ENCODE measurements at regions of chr11 and their contacts with region 1.

Region 1: GRCh38 chr11:61516675-61517572 is 8.4 kb downstream of the LRRC10B start:
- DNase-seq: peak; percentile 24
- ATAC-seq: peak; percentile 56
- H3K4me3 ChIP-seq: no peak overlapping the region; a peak in 1 of 4 replicates
- H3K27ac ChIP-seq: no peak overlapping the region
- H3K4me1 ChIP-seq: peaks cover 5% of the 10 kb centered on the region
- H3K27me3 ChIP-seq: no peaks in the 10 kb centered on the region
- CTCF ChIP-seq: peak; percentile 99

Region 2: GRCh38 chr11:61091373-61092279 is 425.3 kb before region 1 on chr11:
- CTCF ChIA-PET with region 1: no interaction called
- POLR2A ChIA-PET with region 1: no interaction called
- in situ Hi-C with region 1: no loop called
- intact Hi-C with region 1: no loop called
- DNase-seq: no peak
- ATAC-seq: peak; percentile 40; the same call in 1 of the 2 replicates
- H3K4me3 ChIP-seq: no peak overlapping the region
- H3K27ac ChIP-seq: no peak overlapping the region
- H3K4me1 ChIP-seq: no peaks in the 10 kb centered on the region
- H3K27me3 ChIP-seq: no peaks in the 10 kb centered on the region
- CTCF ChIP-seq: no peak

Region 3: DNA sequence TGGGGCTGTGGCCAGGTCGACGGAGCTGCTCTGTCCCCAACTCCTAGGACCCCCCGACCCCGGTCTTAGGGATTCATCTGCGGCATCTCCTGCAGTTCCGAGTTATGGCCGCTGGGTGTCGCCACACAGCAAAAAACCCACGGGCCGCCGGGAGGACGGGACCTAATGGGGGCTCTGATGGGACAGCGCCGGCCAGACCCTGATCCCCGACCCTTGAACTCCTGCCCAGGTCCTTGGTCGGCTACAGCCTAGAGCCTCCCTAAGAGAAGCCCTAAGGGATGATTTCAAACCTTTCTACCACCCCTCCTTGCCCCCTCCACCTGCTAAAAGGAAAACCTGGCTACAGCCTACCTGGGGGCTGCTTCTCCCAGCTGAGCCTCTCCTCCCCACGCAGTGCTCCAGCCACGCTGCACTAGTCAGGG is 39.2 kb before region 1 on chr11:
- CTCF ChIA-PET with region 1: interaction called, 31 read pairs
- POLR2A ChIA-PET with region 1: no interaction called
- in situ Hi-C with region 1: no loop called
- intact Hi-C with region 1: loop called (anchors 1 kb)
- DNase-seq: no peak
- ATAC-seq: peak; percentile 37; the same call in 1 of the 2 replicates
- H3K4me3 ChIP-seq: no peak overlapping the region
- H3K27ac ChIP-seq: no peak overlapping the region
- H3K4me1 ChIP-seq: peaks cover 3% of the 10 kb centered on the region; the same call in 1 of the 2 replicates
- H3K27me3 ChIP-seq: no peaks in the 10 kb centered on the region
- CTCF ChIP-seq: peak; percentile 96

Region 4: DNA sequence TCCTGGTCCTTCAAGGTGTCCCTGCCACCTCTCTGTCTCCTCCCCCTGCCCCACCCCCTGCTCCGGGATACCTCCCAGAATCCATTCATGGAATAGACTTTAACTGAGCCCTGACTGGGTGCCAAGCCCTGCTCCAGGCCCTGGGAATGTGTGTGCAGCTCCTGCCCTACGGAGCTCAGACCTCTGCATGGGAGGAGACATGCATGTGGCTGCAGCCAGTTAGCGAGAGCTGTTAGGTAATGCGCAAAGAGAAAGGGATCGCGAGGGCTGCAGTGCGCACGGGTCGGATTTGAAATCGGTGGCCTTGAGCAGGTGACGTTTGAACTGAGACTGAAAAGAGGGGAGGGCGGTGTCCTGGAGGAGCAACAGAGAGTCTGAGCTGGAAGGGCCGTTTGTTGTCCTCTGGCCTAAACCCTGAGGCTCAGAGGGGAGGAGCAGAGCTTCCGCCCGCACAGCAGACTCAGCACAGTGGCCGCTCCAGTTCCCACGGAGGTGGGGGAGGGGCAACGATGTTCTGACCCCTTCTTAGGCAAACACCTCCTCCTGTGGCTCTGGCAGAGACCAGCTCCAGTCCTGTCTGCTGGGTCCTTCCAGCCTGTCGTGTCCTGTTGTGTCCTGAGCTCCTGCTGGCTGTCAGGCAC is 28.2 kb before region 1 on chr11:
- CTCF ChIA-PET with region 1: interaction called, 11 read pairs
- POLR2A ChIA-PET with region 1: no interaction called
- in situ Hi-C with region 1: no loop called
- intact Hi-C with region 1: no loop called
- DNase-seq: no peak
- ATAC-seq: peak; percentile 77
- H3K4me3 ChIP-seq: peak overlapping the region; percentile 11 to 44
- H3K27ac ChIP-seq: peak overlapping the region; percentile 58
- H3K4me1 ChIP-seq: peaks cover 16% of the 10 kb centered on the region
- H3K27me3 ChIP-seq: no peaks in the 10 kb centered on the region
- CTCF ChIP-seq: no peak

Region 5: DNA sequence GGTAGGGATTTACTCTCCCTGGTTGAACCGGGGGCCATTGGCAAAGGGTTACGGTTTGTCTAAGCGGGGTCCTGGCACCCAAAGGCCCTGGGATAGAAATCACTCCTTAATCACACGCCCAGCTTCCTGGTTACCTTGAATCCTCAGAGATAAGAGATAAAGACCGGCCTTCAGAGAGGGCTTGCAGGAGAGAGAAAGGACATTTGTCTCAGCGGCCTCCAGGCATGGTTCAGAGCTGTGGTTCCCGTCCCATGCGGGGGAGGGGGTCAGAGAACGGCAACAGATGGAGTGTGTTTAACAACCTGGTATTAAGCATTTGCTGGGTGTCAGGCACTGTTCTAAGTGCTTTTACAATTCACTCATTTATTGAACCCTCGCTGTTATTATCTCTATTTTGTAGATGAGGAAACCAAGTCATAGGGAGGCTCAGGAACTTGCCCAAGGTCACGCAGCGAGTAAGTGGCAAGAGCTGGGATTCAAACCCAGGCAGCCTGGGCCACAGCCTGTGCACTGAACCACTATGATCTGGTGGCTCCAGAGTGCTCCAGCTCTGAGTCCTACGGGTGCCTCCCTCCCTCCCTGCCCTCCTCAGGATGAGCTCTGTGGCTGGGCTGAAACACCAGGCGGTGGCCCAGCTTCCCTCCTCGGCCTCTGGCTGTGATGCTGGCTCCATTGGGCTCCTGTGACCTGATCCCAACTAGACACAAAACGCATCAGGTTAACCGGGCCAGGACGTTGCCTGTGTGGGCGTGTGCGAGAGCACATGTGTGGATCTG is 10.2 kb after region 1 on chr11:
- CTCF ChIA-PET with region 1: interaction called, 14 read pairs
- POLR2A ChIA-PET with region 1: no interaction called
- in situ Hi-C with region 1: no loop called
- intact Hi-C with region 1: no loop called
- DNase-seq: no peak
- ATAC-seq: no peak
- H3K4me3 ChIP-seq: no peak overlapping the region
- H3K27ac ChIP-seq: no peak overlapping the region
- H3K4me1 ChIP-seq: no peaks in the 10 kb centered on the region
- H3K27me3 ChIP-seq: no peaks in the 10 kb centered on the region
- CTCF ChIP-seq: no peak

Region 6: DNA sequence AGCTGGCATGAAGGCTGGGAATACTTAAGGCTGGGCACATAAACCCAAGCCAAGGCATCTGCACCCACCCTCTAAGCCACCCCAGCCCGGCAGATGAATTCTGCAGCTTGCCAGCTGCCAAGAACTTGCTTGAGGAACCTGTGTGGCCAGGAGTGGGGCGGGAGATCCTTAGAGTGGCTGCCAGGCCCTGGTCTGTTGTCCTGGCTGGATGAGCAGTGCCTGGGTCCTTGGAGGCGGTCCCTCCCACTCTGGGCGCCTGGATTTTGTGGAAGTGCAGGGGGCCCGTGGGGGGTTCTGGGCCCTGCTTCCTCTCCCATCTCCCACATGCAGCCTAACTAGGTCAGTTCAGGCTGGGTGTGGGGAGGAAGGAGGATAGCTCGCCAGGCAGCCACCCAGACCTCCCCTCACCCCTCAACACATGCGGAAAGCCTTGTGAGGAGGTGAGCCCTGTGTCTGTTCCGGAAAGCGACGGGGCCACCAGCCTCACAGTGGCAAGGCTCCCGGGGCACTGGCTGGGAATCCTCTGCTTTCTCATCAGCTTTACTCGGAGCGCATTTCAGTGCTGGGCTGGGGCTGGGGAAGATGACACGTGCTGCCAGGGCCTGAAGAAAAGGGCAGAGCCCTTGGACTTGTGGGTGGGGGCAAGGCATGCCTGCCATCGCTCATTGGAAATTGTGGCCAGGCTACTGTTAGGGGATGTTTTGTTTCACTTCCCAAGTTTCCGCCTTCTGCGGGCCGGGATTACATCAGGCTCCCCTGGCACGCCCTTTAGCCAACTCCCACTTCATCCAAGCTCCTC is 171.6 kb after region 1 on chr11:
- CTCF ChIA-PET with region 1: interaction called, 11 read pairs
- POLR2A ChIA-PET with region 1: no interaction called
- in situ Hi-C with region 1: no loop called
- intact Hi-C with region 1: no loop called
- DNase-seq: no peak
- ATAC-seq: peak; percentile 21; the same call in 1 of the 2 replicates
- H3K4me3 ChIP-seq: no peak overlapping the region
- H3K27ac ChIP-seq: peak overlapping the region; percentile 34; the same call in 1 of the 2 replicates
- H3K4me1 ChIP-seq: peaks cover 15% of the 10 kb centered on the region
- H3K27me3 ChIP-seq: no peaks in the 10 kb centered on the region
- CTCF ChIP-seq: no peak